GM12878 (cell line): ENCODE measurements at regions of chr11 and their contacts with region 1.

Region 1: DNA sequence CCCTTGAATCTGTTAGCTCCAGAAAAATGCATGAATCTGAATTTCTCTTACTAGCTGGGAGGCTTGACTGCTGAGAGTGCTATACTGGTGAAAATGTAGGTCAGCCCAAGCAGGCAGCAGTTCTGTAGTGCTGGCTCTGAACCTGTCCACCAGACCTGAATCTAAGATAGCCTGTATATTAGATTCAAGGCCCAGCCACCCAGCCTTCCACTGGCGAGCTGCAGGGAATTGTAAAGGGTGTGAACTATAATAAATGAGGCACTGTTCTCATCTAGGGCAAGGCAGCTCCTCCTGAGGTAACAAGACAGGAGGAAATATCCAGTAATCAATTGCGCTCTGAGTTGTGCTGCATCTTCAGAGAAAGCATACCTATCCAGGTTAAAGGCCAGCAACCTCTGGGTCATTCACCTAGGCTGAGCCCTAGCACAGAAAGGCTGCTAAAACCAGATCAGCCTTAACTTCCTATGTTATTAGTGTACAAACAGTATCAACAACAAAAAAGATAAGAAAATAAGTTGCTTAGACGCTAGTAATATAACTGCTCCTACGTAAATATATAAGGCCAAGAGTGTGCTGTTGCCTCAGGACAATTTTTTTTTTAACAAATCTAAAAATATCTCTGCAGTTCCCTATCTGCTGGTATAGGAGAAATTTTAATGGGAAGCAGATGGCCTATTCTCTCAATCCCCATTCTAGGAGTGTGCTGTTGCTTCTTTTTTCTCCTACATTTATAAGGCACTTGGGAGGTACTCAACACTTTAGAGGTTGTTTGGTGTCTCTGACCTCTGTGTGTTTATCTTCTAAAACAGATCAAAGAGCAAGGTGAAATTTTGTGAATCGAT is 63.0 kb downstream of the RELT start:
- DNase-seq: no peak
- ATAC-seq: no peak
- H3K4me3 ChIP-seq: no peak overlapping the region
- H3K27ac ChIP-seq: no peak overlapping the region
- H3K4me1 ChIP-seq: no peaks in the 10 kb centered on the region
- H3K27me3 ChIP-seq: no peaks in the 10 kb centered on the region
- CTCF ChIP-seq: no peak
- EP300 ChIP-seq: no peak
- POLR2A ChIP-seq: no peak
- RAD21 ChIP-seq: no peak

Region 2: GRCh38 chr11:73426219-73426850 is 12.9 kb before region 1 on chr11:
- CTCF ChIA-PET with region 1: interaction called, 3 read pairs
- POLR2A ChIA-PET with region 1: interaction called, 10 read pairs
- RAD21 ChIA-PET with region 1: no interaction called
- SMC1A ChIA-PET with region 1: interaction called, 34 read pairs
- in situ Hi-C with region 1: no loop called
- intact Hi-C with region 1: no loop called
- DNase-seq: no peak
- ATAC-seq: no peak
- H3K4me3 ChIP-seq: no peak overlapping the region
- H3K27ac ChIP-seq: no peak overlapping the region
- H3K4me1 ChIP-seq: peaks cover 3% of the 10 kb centered on the region; the same call in 1 of the 2 replicates
- H3K27me3 ChIP-seq: no peaks in the 10 kb centered on the region
- CTCF ChIP-seq: no peak
- EP300 ChIP-seq: no peak
- POLR2A ChIP-seq: no peak
- RAD21 ChIP-seq: no peak

Region 3: DNA sequence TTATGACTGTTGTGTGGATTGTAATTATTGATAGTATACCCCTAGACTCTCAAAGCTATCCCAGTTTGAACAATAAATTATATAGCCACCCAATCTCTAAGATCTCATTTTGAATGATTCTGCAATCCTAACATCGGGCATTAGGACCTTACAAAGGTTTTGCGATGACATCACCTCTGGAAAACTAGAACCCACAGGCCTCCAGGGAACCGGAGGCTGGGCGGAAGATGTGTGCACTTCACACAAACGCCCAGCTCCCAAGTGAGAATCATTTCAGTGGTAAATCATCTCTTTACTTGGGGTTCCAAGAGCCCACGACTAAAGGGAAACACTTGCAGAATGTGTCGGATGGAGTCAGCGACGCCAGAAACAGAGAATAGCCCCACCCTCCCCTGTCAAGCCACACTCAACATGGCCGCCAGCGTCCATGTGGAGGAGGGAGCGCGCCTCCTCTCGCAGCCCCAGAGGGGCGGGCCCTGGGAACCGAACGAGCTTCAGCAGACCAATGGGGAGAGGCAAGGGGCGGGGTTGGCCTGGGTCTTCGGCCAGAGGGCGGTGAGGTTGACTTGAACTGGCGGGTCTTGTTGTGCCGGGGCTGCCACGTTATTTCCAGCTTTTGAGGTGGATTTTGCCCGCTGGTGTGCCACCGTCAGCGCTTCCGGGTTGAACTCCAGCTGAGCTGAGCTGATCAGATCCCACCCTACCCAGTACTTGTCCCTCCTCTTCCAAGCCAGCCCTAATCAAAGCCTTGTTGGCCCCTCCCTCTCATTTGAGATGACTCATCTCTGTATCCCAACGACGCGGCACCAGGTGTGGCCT is 340.1 kb after region 1 on chr11:
- CTCF ChIA-PET with region 1: no interaction called
- POLR2A ChIA-PET with region 1: no interaction called
- RAD21 ChIA-PET with region 1: no interaction called
- SMC1A ChIA-PET with region 1: no interaction called
- in situ Hi-C with region 1: no loop called
- intact Hi-C with region 1: no loop called
- DNase-seq: peak; percentile 97
- ATAC-seq: peak; percentile 100
- H3K4me3 ChIP-seq: peak overlapping the region; percentile 79
- H3K27ac ChIP-seq: peak overlapping the region; percentile 96
- H3K4me1 ChIP-seq: peaks cover 4% of the 10 kb centered on the region; the same call in 1 of the 2 replicates
- H3K27me3 ChIP-seq: no peaks in the 10 kb centered on the region
- CTCF ChIP-seq: no peak
- EP300 ChIP-seq: no peak
- POLR2A ChIP-seq: peak; percentile 85
- RAD21 ChIP-seq: no peak